PC-9 (cell line): ENCODE measurements at regions of chr19 and their contacts with region 1.

Region 1: DNA sequence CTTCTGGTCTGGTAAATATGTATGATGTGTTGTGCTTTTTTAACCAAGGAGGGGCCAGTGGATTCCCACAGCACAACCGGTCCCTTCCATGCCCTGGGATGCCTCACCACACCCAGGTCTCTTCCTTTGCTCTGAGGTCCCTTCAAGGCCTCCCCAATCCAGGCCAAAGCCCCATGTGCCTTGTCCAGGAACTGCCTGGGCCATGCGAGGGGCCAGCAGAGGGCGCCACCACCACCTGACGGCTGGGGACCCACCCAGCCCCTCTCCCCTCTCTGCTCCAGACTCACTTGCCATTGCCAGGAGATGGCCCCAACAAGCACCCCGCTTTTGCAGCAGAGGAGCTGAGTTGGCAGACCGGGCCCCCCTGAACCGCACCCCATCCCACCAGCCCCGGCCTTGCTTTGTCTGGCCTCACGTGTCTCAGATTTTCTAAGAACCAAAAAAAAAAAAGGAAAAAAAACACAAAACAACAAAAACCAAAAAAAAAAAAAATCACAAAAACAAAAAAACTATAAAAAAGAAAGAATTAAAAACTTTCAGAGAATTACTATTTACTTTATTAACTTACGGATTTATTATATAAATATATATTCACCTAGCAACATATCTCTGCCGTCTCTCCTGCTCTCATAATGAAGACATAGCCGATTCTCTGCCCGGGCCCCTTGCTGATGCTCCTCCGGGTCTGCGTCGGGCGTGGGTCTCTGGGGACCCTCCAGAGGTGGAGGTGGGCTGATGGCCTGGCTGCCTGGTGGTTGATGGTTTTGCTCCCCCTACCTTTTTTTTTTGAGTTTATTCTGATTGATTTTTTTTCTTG is 14.4 kb downstream of the CAPN12 start:
- DNase-seq: peak; percentile 65 to 81
- H3K4me3 ChIP-seq: no peak overlapping the region
- H3K27ac ChIP-seq: peak overlapping the region; percentile 58; the same call in 1 of the 2 replicates
- H3K4me1 ChIP-seq: peaks cover 41% of the 10 kb centered on the region
- H3K27me3 ChIP-seq: no peaks in the 10 kb centered on the region
- CTCF ChIP-seq: peak; percentile 92

Region 2: DNA sequence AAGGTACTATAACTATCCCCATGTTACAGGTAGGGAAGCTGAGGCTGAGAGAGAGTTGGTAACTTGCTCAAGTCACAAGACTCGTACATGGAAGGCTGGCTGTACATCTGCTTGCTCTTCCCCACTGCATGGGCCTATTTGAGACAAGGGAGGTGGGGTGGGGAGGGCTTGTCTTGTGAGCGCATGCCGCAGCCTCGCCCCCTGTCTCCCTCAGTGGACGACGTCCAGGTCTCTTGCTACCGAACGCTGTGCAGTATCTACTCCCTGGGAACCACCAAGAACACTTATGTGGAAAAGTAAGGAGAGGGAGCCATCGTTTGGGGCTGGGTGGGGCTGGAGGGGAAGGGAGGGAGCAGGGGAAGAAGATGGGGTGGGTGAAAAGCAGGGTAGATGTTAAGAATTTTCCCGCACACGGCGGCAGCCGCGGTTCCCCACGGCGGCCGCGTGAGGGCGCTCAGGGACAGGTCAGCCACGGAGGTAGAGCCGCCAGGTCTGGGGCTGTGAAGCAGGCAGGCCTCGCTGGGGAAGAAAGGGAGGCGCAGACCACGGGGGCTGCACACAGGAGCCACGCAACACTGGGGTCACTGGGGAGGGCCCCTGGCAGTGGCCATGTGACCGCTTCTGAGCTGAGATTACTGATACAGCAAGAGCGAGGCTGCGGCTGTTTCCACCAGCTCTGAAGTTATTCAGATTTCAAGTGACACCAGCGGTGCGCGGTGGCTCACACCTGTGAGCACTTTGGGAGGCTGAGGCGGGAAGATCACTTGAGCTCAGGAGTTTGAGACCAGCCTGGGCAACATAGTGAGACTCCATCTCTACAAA is 214.8 kb before region 1 on chr19:
- CTCF ChIA-PET with region 1: no interaction called
- POLR2A ChIA-PET with region 1: no interaction called
- intact Hi-C with region 1: loop called (anchors 10 kb)
- DNase-seq: peak in 1 of 2 experiments; percentile 70
- H3K4me3 ChIP-seq: no peak overlapping the region
- H3K27ac ChIP-seq: no peak overlapping the region
- H3K4me1 ChIP-seq: no peaks in the 10 kb centered on the region
- H3K27me3 ChIP-seq: peaks cover 15% of the 10 kb centered on the region; the same call in 1 of the 2 replicates
- CTCF ChIP-seq: peak; percentile 90

Region 3: DNA sequence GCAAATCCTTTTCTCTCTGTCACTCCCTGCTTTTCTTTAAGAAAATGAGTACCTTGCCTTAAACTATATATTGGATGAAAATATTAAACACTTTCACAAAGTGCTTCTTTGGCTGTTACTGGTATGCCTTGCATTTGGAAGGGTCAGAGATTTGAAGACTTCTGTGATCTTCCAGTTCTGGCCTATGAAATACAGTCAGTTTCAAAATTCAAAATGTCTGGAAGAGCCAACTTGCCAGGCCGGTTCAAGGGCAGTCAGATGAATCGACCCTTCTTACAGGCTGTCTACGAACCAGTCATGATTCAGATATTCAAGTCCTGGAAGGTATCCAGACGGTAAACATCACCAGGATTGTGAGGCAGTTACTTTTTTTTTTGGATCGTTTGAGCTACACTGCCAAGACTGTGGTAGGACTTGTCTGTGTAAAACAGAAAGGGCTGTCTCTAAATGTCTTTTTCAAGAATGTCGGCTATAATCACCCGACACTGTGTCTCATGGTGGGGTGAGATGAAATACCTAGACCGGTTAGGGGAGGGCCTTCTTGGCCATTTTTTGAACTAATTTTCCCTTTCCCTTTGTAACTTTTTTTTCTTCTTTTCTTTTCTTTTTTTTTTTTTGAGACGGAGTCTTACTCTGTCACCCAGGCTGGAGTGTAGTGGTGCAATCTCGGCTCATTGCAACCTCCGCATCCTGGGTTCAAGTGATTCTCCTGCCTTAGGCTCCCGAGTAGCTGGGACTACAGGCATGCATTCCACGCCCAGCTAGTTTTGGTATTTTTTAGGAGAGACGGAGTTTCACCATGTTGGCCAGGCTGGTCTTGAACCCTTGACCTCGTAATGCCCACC is 71.2 kb before region 1 on chr19:
- CTCF ChIA-PET with region 1: no interaction called
- POLR2A ChIA-PET with region 1: interaction called, 6 read pairs
- intact Hi-C with region 1: loop called (anchors 5 kb)
- DNase-seq: peak; percentile 70 to 98
- H3K4me3 ChIP-seq: peak overlapping the region; percentile 54
- H3K27ac ChIP-seq: peak overlapping the region; percentile 99
- H3K4me1 ChIP-seq: peaks cover 97% of the 10 kb centered on the region
- H3K27me3 ChIP-seq: no peaks in the 10 kb centered on the region
- CTCF ChIP-seq: no peak

Region 4: DNA sequence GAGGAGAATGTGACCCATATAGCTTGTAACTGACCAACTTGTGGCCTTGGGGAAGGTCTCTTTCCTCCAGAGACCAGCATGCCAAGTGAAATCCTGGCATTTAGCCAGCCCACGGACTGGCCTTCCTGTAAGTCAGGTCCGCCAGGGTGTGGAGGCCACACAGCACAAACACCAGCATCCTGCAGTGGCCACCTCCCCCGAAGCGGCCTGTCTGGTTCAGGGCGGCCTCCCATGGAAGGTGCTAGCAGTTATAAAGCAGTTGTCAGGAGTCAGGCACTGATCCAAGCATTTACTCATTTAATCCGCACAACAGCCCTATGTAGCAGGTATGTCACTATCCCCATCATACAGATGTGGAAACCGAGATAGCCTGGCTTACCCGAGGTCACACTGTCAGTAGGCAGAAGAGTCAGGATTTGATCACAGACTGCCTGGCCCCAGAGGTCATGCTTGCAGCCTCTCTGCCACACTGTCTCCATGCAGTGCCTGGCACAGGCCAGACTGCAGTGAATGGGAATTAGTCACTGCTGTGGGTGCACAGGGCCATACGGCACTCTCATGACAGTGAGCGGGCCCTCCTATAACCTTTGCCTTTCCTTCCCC is 22.2 kb before region 1 on chr19:
- CTCF ChIA-PET with region 1: no interaction called
- POLR2A ChIA-PET with region 1: interaction called, 22 read pairs
- intact Hi-C with region 1: no loop called
- DNase-seq: peak; percentile 69 to 84
- H3K4me3 ChIP-seq: no peak overlapping the region
- H3K27ac ChIP-seq: peak overlapping the region; percentile 46
- H3K4me1 ChIP-seq: peaks cover 26% of the 10 kb centered on the region
- H3K27me3 ChIP-seq: no peaks in the 10 kb centered on the region
- CTCF ChIP-seq: no peak

Region 5: DNA sequence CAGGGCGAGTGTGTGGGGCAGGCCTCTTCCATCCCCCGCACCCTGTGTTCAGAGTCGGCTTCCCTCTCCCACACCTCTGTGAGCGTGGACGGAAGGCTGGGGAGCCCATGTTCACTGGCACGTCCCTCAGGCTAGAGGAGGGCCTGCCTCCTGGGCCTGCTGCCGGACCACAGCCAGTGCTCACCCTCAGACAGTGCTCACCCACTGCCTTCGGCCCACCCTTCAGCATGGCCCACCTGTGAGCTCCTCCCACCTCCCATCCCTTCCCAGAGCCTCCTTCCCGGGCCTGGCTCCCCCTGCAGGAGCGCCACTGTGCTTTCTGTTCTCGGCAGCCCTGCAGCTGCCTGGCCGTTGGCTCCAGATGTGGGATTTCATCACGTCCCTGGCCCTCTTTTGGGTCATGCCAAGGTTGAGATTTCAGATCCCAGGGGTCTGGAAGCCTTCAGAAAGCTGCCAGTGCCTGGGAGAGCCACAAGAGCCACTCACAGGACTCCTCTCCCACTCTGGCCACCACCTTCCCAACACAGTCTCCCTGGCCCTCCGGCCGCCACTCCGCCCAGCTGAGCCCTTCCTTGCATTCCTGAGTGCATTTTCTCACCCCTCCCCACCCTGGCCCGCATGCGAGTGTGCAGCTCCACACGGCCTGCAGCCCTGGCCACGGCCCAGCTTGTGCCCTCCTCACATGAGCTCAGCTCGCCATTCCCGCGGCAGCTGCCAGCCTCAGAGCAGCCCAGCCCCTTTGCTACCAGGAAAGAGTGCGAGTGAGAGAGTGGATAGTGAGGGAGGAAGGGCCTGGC is 10.9 kb before region 1 on chr19:
- CTCF ChIA-PET with region 1: interaction called, 10 read pairs
- POLR2A ChIA-PET with region 1: interaction called, 8 read pairs
- intact Hi-C with region 1: no loop called
- DNase-seq: peak; percentile 56 to 93
- H3K4me3 ChIP-seq: no peak overlapping the region
- H3K27ac ChIP-seq: peak overlapping the region; percentile 80
- H3K4me1 ChIP-seq: peaks cover 11% of the 10 kb centered on the region
- H3K27me3 ChIP-seq: no peaks in the 10 kb centered on the region
- CTCF ChIP-seq: no peak; the same call in 1 of the 2 replicates